ENCODE measurements at regions of chr4 and their contacts with region 1.

Region 1: GRCh38 chr4:184263910-184264732 is 46.4 kb upstream of the ENPP6 start:
- DNase-seq: peak; percentile 100
- ATAC-seq: peak; percentile 47
- H3K4me3 Mint-ChIP-seq: peak overlapping the region; percentile 3
- H3K27ac Mint-ChIP-seq: peak overlapping the region; percentile 61
- H3K4me1 Mint-ChIP-seq: peaks cover 51% of the 10 kb centered on the region
- H3K27me3 Mint-ChIP-seq: no peaks in the 10 kb centered on the region
- CTCF ChIP-seq: peak; percentile 90

Region 2: DNA sequence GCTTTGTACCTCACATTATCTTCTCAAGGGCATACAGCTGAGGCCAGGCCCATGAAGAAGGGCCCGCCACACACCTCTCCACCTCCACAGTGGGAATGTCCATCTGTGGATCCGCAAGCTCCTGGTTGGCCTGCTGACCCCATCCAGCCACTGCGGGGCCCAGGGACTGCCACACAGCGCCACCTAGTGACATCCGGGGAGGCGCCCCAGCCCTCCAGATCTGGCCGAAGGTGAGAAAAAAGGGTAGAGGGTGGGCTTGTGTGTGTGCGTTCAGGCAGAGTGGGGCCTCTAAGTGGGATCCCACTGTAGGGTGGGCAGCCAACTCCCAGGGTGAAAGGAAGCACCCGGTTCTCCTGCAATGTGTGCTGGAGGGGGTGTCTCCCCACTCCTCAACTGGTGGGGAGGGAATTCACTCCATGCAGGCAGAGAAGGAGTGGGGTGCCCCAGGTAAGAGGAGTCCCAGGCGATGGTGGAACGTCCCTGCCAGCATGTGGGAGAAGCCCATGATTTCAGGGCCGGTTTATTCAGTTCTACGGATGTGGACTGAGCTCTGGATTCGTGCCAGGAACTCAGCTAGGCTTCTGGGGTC is 163.7 kb before region 1 on chr4:
- CTCF ChIA-PET with region 1: no interaction called
- POLR2A ChIA-PET with region 1: no interaction called
- intact Hi-C with region 1: no loop called
- DNase-seq: peak; percentile 60
- ATAC-seq: peak; percentile 66
- H3K4me3 Mint-ChIP-seq: no peak overlapping the region
- H3K27ac Mint-ChIP-seq: no peak overlapping the region
- H3K4me1 Mint-ChIP-seq: no peaks in the 10 kb centered on the region
- H3K27me3 Mint-ChIP-seq: peaks cover 16% of the 10 kb centered on the region
- CTCF ChIP-seq: peak; percentile 91

Region 3: GRCh38 chr4:184287697-184288255 is 23.7 kb after region 1 on chr4:
- CTCF ChIA-PET with region 1: interaction called, 89 read pairs
- POLR2A ChIA-PET with region 1: interaction called, 48 read pairs
- intact Hi-C with region 1: loop called (anchors 2 kb)
- DNase-seq: no peak
- ATAC-seq: no peak
- H3K4me3 Mint-ChIP-seq: no peak overlapping the region
- H3K27ac Mint-ChIP-seq: peak overlapping the region; percentile 88
- H3K4me1 Mint-ChIP-seq: peaks cover 53% of the 10 kb centered on the region
- H3K27me3 Mint-ChIP-seq: no peaks in the 10 kb centered on the region
- CTCF ChIP-seq: no peak

Region 4: DNA sequence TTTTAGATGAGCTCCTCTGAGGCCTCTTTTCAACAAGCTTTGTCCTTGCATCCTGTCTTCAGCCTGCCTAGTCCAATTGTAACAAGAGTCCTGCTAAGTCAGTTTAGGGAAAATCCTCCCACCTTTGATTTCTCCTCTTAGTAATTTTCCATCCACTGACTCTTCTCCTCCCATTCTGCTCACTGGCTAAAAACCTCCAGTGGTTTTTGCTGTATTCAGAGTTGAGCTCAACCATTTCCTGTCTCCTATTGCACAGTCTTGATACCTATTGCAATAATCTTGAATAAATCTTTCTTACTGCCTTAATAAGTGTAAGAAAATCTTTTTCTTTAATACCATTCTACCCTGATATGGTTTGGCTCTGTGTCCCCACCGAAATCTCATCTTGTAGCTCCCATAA is 71.4 kb after region 1 on chr4:
- CTCF ChIA-PET with region 1: interaction called, 15 read pairs
- POLR2A ChIA-PET with region 1: no interaction called
- intact Hi-C with region 1: no loop called
- DNase-seq: no peak
- ATAC-seq: peak; percentile 74
- H3K4me3 Mint-ChIP-seq: no peak overlapping the region
- H3K27ac Mint-ChIP-seq: peak overlapping the region; percentile 58
- H3K4me1 Mint-ChIP-seq: peaks cover 15% of the 10 kb centered on the region
- H3K27me3 Mint-ChIP-seq: no peaks in the 10 kb centered on the region
- CTCF ChIP-seq: no peak

Region 5: GRCh38 chr4:184417802-184418511 is 153.8 kb after region 1 on chr4:
- CTCF ChIA-PET with region 1: interaction called, 13 read pairs
- POLR2A ChIA-PET with region 1: no interaction called
- intact Hi-C with region 1: loop called (anchors 5 kb)
- DNase-seq: peak; percentile 22
- ATAC-seq: peak; percentile 76
- H3K4me3 Mint-ChIP-seq: peak overlapping the region; percentile 70
- H3K27ac Mint-ChIP-seq: peak overlapping the region; percentile 93
- H3K4me1 Mint-ChIP-seq: peaks cover 81% of the 10 kb centered on the region
- H3K27me3 Mint-ChIP-seq: no peaks in the 10 kb centered on the region
- CTCF ChIP-seq: no peak

Region 6: GRCh38 chr4:184538023-184538599 is 274.0 kb after region 1 on chr4:
- CTCF ChIA-PET with region 1: interaction called, 39 read pairs
- POLR2A ChIA-PET with region 1: interaction called, 6 read pairs
- intact Hi-C with region 1: loop called (anchors 1 kb)
- DNase-seq: peak; percentile 75
- ATAC-seq: peak; percentile 59
- H3K4me3 Mint-ChIP-seq: peak overlapping the region; percentile 99
- H3K27ac Mint-ChIP-seq: peak overlapping the region; percentile 97
- H3K4me1 Mint-ChIP-seq: peaks cover 33% of the 10 kb centered on the region
- H3K27me3 Mint-ChIP-seq: no peaks in the 10 kb centered on the region
- CTCF ChIP-seq: peak; percentile 54

Region 7: DNA sequence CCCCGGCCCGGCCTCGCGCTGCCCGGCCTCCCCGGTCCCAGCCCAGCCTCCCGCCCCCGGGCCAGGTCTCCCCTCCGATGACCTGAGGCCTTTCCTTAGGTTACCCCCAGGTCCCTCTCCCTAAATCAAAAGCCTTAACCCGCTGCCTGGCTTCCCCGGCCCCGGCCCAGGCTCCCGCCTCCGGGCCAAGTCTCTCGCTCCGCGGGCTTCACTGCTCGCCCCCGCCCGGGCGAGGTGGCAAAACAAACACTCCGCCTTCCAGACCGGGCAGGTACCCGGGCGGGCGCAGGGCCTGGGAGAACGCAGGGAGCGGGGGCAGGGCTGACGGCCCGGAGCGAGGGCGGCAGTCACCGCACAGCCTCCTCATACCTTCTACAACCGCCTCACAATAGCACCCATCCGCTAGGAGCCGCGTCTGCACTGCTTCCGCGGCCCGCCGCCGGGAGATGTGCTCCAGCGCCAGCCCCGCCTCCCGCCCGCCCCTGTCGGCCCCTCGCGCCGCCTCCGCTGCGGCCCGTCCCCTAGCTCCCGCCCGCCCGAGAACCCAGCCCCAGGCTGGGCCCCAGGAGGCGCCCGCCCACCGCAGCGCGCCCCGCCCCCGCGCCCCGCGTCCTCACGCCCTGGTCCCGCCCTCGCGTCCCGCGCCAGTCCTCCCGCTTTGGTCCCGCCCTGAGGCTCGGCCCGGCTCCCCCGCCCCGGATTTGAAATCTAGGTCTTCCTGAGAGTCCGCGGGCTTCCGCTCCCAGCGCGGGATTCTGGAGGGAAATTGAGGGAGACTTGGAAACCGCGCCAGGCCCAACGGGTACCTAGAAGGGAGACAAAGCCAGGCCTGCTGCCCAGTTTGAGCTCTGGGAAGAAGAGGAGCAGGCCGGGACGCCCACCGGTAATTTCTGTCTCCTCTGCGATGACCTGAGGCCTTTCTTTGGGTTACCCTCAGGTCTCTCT is 385.2 kb after region 1 on chr4 and contains the starts of genes CASP3 and PRIMPOL:
- CTCF ChIA-PET with region 1: interaction called, 22 read pairs
- POLR2A ChIA-PET with region 1: interaction called, 6 read pairs
- intact Hi-C with region 1: no loop called
- DNase-seq: peak; percentile 95
- ATAC-seq: peak; percentile 83
- H3K4me3 Mint-ChIP-seq: peak within 1 kb of the TSS; percentile 94
- H3K27ac Mint-ChIP-seq: peak within 1 kb of the TSS; percentile 92
- H3K4me1 Mint-ChIP-seq: peaks cover 46% of the 10 kb centered on the region
- H3K27me3 Mint-ChIP-seq: no peaks in the 10 kb centered on the region
- CTCF ChIP-seq: no peak
- total RNA-seq, gene CASP3: 96.9 to 100 TPM
- total RNA-seq, gene PRIMPOL: 16.9 to 17.3 TPM